RWPE1 (cell line): ENCODE measurements at regions of chr11 and their contacts with region 1.

Region 1: GRCh38 chr11:75142714-75143419 is 8.0 kb upstream of the SLCO2B1 start:
- DNase-seq: peak; percentile 96
- H3K27ac ChIP-seq: peak overlapping the region; percentile 67
- CTCF ChIP-seq: no peak

Region 2: DNA sequence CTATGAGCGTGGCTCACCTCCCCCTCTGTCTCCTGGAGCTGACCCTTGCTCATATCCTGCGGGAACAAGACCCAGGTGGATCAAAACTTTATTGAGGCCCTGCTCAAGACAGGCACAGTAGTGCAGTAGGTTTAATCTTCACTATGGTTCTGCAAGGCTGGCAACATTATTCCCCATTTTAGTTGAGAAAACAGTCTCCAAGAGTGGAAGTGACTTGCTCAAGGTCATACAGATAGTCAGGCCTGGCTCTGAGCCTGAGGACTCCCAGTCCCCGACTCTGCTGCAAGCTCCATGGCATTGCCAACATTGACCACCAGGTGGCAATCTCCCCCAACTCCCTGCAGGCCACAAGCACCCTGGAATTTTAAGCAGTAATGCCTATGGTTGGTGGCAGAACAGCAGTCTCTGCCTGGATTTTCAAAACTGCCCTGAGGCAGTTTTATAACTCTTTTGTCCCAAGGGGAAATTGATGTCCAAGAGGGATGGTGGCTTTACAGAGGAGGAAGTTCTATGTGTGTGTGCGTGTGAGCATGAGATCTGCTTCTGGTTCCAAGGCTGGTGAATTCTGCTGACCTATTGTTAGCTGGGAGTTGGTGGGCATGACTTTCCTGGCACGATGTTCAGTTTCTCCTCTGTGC is 120.0 kb before region 1 on chr11:
- CTCF ChIA-PET with region 1: interaction called, 10 read pairs
- POLR2A ChIA-PET with region 1: no interaction called
- DNase-seq: peak; percentile 76
- H3K27ac ChIP-seq: no peak overlapping the region
- CTCF ChIP-seq: peak; percentile 93

Region 3: GRCh38 chr11:75204685-75205563 is 62.1 kb after region 1 on chr11:
- CTCF ChIA-PET with region 1: interaction called, 19 read pairs
- POLR2A ChIA-PET with region 1: no interaction called
- DNase-seq: peak; percentile 76
- H3K27ac ChIP-seq: no peak overlapping the region
- CTCF ChIP-seq: peak; percentile 81

Region 4: GRCh38 chr11:75241036-75241905 is 98.4 kb after region 1 on chr11:
- CTCF ChIA-PET with region 1: interaction called, 22 read pairs
- POLR2A ChIA-PET with region 1: no interaction called
- DNase-seq: peak; percentile 86
- H3K27ac ChIP-seq: no peak overlapping the region
- CTCF ChIP-seq: peak; percentile 97

Region 5: DNA sequence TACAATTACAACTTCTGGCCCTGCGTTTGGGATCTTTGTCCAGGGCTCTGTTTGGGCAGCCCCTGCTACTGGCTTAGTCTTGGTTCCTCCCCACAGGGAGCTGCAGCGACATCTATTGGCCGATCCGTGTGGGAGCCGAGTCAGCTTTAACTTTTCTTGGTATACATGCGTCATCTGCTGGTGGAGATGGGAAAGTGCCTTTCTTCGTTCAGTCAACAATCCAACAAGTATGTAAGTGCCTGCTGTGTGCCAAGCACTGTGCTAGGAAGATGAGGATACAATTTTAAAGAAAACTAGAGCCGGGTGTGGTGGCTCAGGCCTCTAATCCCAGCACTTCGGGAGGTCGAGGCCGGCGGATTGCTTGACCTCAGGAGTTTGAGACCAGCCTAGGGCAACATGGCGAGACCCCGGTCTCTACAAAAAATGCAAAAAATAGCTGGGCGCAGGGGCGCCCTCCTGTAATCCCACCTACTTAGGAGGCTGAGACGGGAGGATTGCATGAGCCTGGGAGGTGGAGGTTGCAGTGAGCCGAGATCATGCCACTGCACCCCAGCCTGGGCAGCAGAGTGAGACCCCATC is 105.9 kb after region 1 on chr11:
- CTCF ChIA-PET with region 1: interaction called, 13 read pairs
- POLR2A ChIA-PET with region 1: no interaction called
- DNase-seq: peak; percentile 80
- H3K27ac ChIP-seq: no peak overlapping the region
- CTCF ChIP-seq: peak; percentile 98